ENCODE measurements at regions of chr18 and their contacts with region 1.

Region 1: GRCh38 chr18:79644006-79644665 is 35.5 kb upstream of the CTDP1 start:
- DNase-seq: peak; percentile 53 to 72
- ATAC-seq: peak; percentile 73 to 85 (median 82)
- H3K4me3 ChIP-seq: no peak overlapping the region
- H3K27ac ChIP-seq: no peak overlapping the region
- H3K4me1 ChIP-seq: peaks cover 3% of the 10 kb centered on the region
- H3K27me3 ChIP-seq: peaks cover 0 to 18% (median 2%) of the 10 kb centered on the region in 3 donors
- CTCF ChIP-seq: peak; percentile 98

Region 2: GRCh38 chr18:79528846-79529245 is 115.3 kb before region 1 on chr18:
- intact Hi-C with region 1: loop called (anchors 5 kb)
- DNase-seq: peak in 1 of 2 donors; percentile 49
- ATAC-seq: peak; percentile 59 to 77 (median 68)
- H3K4me3 ChIP-seq: no peak overlapping the region
- H3K27ac ChIP-seq: no peak overlapping the region
- H3K4me1 ChIP-seq: no peaks in the 10 kb centered on the region
- H3K27me3 ChIP-seq: no peaks in the 10 kb centered on the region
- CTCF ChIP-seq: peak; percentile 89